Lower leg skin (tissue), 4 donors: ENCODE measurements at regions of chr22 and their contacts with region 1.

Region 1: DNA sequence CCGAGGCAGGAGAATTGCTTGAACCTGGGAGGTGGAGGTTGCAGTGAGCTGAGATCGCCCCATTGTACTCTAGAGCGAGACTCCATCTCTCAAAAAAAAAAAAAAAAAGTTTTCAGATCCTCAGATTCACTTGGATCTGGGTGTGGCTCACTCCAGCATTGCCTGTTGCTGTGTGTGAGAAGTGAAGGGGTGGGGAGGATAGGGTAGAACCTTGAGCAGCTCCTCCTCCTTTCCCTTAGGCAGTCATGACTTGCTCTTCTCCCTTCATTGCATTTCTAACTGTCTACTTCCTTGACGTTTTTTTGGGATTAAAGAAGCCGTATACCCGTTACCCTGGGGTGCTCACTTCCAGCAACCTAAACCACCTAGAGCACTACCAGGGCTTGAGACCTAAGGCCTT is 63.1 kb upstream of the YWHAH start:
- DNase-seq: no peak
- H3K4me3 ChIP-seq: no peak overlapping the region
- CTCF ChIP-seq: no peak
- POLR2A ChIP-seq: no peak

Region 2: DNA sequence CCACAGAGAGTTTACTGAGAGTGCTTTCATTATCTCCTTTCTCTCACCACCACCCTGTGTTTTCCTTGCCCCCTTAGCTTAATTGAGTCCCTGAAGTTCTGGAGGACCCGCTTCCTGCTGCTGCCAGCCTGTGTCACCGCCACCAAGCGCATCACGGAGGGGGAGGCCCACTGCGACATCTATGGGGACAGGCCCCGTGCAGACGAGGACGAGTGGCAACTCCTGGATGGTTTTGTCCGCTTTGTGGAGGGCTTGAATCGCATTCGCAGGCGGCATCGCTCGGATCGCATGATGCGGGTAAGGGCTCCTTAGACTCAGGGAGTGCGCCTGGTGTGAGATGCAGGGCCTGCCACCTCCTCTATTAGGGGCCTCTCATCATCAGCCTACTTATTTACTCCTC is 36.3 kb before region 1 on chr22:
- intact Hi-C with region 1: loop called (anchors 1 kb)
- DNase-seq: no peak
- H3K4me3 ChIP-seq: no peak overlapping the region
- CTCF ChIP-seq: no peak
- POLR2A ChIP-seq: no peak

Region 3: GRCh38 chr22:32574408-32574807 is 693.2 kb after region 1 on chr22:
- intact Hi-C with region 1: no loop called
- DNase-seq: peak in 1 of 2 donors; percentile 28
- H3K4me3 ChIP-seq: no peak overlapping the region
- CTCF ChIP-seq: no peak
- POLR2A ChIP-seq: no peak